ENCODE measurements at regions of chr15 and their contacts with region 1.

Region 1: GRCh38 chr15:39054128-39054732 is 489.6 kb upstream of the RASGRP1 start:
- DNase-seq: no peak
- ATAC-seq: no peak
- H3K4me3 ChIP-seq: no peak overlapping the region
- H3K4me3 Mint-ChIP-seq: no peak overlapping the region
- H3K27ac ChIP-seq: no peak overlapping the region
- H3K27ac Mint-ChIP-seq: no peak overlapping the region
- H3K4me1 ChIP-seq: no peaks in the 10 kb centered on the region
- H3K4me1 Mint-ChIP-seq: no peaks in the 10 kb centered on the region
- H3K27me3 ChIP-seq: no peaks in the 10 kb centered on the region
- H3K27me3 Mint-ChIP-seq: peaks cover 5% of the 10 kb centered on the region
- CTCF ChIP-seq: no peak

Region 2: DNA sequence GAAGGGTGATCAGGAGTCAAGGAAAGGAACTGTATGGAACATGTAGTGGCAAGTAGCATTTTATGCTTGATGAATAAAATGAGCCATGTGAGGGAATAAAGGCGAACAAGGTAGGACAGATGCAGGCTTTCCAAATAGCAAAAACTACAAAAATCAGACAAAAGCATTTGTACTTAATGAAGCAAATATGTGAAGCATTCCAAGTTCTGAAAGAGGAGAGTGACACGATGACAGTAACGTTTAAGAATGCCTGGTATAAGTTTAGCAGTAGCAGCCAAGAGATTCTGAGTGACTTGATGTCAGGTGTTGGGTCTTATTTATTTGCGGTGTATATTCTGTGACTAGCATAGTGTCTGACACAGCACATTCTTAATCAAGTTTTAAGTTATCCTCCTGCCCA is 81.4 kb before region 1 on chr15:
- CTCF ChIA-PET with region 1: no interaction called
- POLR2A ChIA-PET with region 1: no interaction called
- intact Hi-C with region 1: no loop called
- DNase-seq: no peak
- ATAC-seq: no peak
- H3K4me3 ChIP-seq: no peak overlapping the region
- H3K4me3 Mint-ChIP-seq: no peak overlapping the region
- H3K27ac ChIP-seq: no peak overlapping the region
- H3K27ac Mint-ChIP-seq: no peak overlapping the region
- H3K4me1 ChIP-seq: no peaks in the 10 kb centered on the region
- H3K4me1 Mint-ChIP-seq: no peaks in the 10 kb centered on the region
- H3K27me3 ChIP-seq: no peaks in the 10 kb centered on the region
- H3K27me3 Mint-ChIP-seq: peaks cover 3% of the 10 kb centered on the region
- CTCF ChIP-seq: no peak

Region 3: DNA sequence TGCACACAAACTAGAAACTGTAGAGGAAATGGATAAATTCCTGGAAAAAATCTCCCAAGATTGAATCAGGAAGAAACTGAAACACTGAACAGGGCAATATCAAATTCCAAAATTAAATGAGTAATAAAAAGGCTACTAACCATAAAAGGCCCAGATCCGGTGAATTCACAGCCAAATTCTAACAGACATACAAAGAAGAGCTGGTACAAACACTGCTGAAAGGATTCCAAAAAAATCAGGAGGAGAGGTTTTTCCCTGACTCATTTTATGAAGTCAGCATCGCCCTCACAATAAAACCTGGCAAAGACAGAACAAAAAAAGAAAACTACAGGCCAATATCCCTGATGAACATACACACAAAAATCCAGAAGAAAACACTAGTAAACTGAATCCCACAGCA is 64.3 kb after region 1 on chr15:
- CTCF ChIA-PET with region 1: no interaction called
- POLR2A ChIA-PET with region 1: no interaction called
- intact Hi-C with region 1: loop called in 1 of 2 experiments (anchors 10 kb)
- DNase-seq: no peak
- ATAC-seq: no peak
- H3K4me3 ChIP-seq: no peak overlapping the region
- H3K4me3 Mint-ChIP-seq: no peak overlapping the region
- H3K27ac ChIP-seq: no peak overlapping the region
- H3K27ac Mint-ChIP-seq: no peak overlapping the region
- H3K4me1 ChIP-seq: no peaks in the 10 kb centered on the region
- H3K4me1 Mint-ChIP-seq: no peaks in the 10 kb centered on the region
- H3K27me3 ChIP-seq: peaks cover 0 to 11% of the 10 kb centered on the region in 2 experiments
- H3K27me3 Mint-ChIP-seq: peaks cover 25% of the 10 kb centered on the region
- CTCF ChIP-seq: no peak

Region 4: DNA sequence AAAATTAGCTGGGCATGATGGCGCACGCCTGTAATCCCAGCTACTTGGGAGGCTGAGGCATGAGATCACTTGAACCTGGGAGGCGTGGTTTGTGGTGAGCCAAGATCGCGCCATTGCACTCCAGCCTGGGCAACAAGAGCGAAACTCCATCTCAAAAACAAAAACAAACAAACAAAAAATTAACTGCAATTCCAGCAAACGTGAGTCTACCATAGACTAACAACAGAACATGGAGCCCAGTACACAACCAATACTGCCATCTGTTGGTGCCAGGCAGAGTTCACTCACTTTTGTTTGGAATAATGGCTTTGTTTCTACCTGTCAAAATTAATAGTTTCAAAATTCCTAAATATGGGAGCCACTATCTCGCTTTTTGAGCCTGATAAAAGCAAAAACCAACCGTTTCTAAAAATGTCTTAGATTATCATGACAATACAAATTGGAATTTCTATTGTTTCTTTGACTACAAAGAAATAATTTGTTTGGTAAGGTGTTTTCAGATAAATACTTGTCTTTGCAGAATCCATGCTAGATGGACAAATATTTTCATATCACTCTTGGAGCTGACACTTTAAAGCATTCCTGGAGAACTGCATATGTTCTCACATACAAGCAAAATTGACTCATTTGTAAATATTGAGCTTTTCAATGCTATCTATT is 820.8 kb after region 1 on chr15:
- CTCF ChIA-PET with region 1: no interaction called
- POLR2A ChIA-PET with region 1: no interaction called
- intact Hi-C with region 1: loop called in 1 of 2 experiments (anchors 5 kb)
- DNase-seq: peak in 5 of 14 experiments; percentile 6 to 51 (median 24)
- ATAC-seq: no peak
- H3K4me3 ChIP-seq: no peak overlapping the region
- H3K4me3 Mint-ChIP-seq: no peak overlapping the region
- H3K27ac ChIP-seq: no peak overlapping the region
- H3K27ac Mint-ChIP-seq: no peak overlapping the region
- H3K4me1 ChIP-seq: no peaks in the 10 kb centered on the region
- H3K4me1 Mint-ChIP-seq: no peaks in the 10 kb centered on the region
- H3K27me3 ChIP-seq: peaks cover 0 to 8% of the 10 kb centered on the region in 2 experiments
- H3K27me3 Mint-ChIP-seq: peaks cover 4% of the 10 kb centered on the region
- CTCF ChIP-seq: peak; percentile 58